ENCODE measurements at regions of chr21 and their contacts with region 1.

Region 1: GRCh38 chr21:39137248-39138178 is 45.7 kb downstream of the PSMG1 start:
- DNase-seq: peak; percentile 84
- H3K4me3 Mint-ChIP-seq: no peak overlapping the region
- H3K27ac Mint-ChIP-seq: no peak overlapping the region
- H3K4me1 Mint-ChIP-seq: peaks cover 14% of the 10 kb centered on the region
- H3K27me3 Mint-ChIP-seq: no peaks in the 10 kb centered on the region
- CTCF ChIP-seq: no peak

Region 2: DNA sequence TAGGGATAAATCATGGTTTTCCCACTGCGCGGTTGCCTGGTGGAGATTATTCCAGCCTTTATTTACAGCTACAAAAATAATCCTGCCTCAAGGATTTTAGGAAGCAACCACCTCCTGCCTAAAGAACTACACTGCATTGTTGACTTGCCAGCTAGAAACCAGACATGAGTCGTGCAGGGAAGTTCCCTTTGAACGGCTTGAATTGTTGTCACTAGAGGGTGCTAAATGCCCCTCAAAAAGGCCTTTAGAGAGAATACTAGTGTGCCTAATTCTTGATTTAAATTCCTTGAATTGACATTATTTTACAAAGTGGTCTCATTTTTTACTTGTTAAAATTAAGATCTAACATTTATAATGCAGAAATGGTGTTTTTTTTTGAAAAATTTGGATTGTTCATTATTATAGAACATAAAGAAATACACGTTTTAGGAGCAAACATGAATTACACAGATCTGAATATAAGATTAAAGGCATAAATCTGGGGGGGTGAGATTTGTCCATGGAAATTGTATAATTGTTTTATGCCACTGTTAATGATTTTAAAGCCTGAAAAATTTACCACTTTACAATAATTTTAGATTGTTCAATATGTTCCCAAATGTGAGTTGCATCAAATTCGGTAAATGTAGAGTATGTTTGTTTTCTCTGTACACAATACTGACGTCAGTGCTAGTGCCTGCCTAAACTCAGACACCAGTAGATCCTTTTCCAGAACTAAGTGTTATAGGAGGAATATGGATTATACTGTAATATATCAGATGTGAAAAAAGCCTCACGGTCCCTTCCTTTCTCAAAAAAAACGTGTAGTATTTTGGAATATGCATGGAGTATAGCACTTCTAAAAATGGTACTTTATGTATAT is 631.6 kb before region 1 on chr21:
- CTCF ChIA-PET with region 1: interaction called, 11 read pairs
- POLR2A ChIA-PET with region 1: no interaction called
- intact Hi-C with region 1: loop called (anchors 1 kb)
- DNase-seq: peak; percentile 81
- H3K4me3 Mint-ChIP-seq: no peak overlapping the region
- H3K27ac Mint-ChIP-seq: no peak overlapping the region
- H3K4me1 Mint-ChIP-seq: peaks cover 5% of the 10 kb centered on the region
- H3K27me3 Mint-ChIP-seq: no peaks in the 10 kb centered on the region
- CTCF ChIP-seq: peak; percentile 54

Region 3: GRCh38 chr21:38669176-38669575 is 468.3 kb before region 1 on chr21:
- CTCF ChIA-PET with region 1: interaction called, 28 read pairs
- POLR2A ChIA-PET with region 1: interaction called, 6 read pairs
- intact Hi-C with region 1: loop called (anchors 1 kb)
- DNase-seq: peak; percentile 48
- H3K4me3 Mint-ChIP-seq: no peak overlapping the region
- H3K27ac Mint-ChIP-seq: no peak overlapping the region
- H3K4me1 Mint-ChIP-seq: no peaks in the 10 kb centered on the region
- H3K27me3 Mint-ChIP-seq: peaks cover 35% of the 10 kb centered on the region
- CTCF ChIP-seq: peak; percentile 48

Region 4: DNA sequence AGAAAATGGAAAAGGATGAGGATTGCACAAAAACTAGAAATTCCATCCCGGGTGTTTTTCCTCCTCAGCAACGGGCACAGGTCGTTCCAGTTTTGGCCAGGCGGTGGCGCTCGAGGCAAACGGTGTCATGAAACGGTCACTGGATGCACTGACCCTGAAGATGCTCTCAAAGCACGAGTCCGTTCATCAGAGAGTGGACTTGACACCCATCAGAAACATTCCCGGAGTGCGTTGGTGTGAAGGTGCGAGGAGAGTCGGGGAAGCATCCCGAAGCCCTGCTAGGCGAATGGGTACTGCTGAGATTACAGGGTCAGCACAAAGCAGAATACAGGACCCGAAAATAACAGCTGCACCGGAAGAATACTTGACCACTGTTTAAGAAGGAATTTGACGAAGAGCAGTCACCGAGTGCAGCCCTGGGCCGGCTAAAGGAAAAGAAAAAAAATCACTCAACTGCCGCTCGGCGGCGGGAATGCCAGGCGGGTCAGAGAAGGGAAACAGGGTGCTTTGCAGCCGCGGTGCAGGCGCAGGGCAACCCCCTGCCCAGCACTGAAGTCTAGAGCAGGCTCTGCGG is 403.5 kb before region 1 on chr21:
- CTCF ChIA-PET with region 1: interaction called, 19 read pairs
- POLR2A ChIA-PET with region 1: interaction called, 5 read pairs
- intact Hi-C with region 1: loop called (anchors 1 kb)
- DNase-seq: peak; percentile 75
- H3K4me3 Mint-ChIP-seq: no peak overlapping the region
- H3K27ac Mint-ChIP-seq: no peak overlapping the region
- H3K4me1 Mint-ChIP-seq: peaks cover 4% of the 10 kb centered on the region
- H3K27me3 Mint-ChIP-seq: no peaks in the 10 kb centered on the region
- CTCF ChIP-seq: peak; percentile 91

Region 5: GRCh38 chr21:39176271-39176709 is 38.8 kb after region 1 on chr21:
- CTCF ChIA-PET with region 1: interaction called, 15 read pairs
- POLR2A ChIA-PET with region 1: no interaction called
- intact Hi-C with region 1: no loop called
- DNase-seq: no peak
- H3K4me3 Mint-ChIP-seq: no peak overlapping the region
- H3K27ac Mint-ChIP-seq: no peak overlapping the region
- H3K4me1 Mint-ChIP-seq: peaks cover 18% of the 10 kb centered on the region
- H3K27me3 Mint-ChIP-seq: no peaks in the 10 kb centered on the region
- CTCF ChIP-seq: no peak

Region 6: GRCh38 chr21:39388038-39388810 is 250.7 kb after region 1 on chr21:
- CTCF ChIA-PET with region 1: no interaction called
- POLR2A ChIA-PET with region 1: no interaction called
- intact Hi-C with region 1: no loop called
- DNase-seq: peak; percentile 88
- H3K4me3 Mint-ChIP-seq: peak overlapping the region; percentile 68
- H3K27ac Mint-ChIP-seq: peak overlapping the region; percentile 31
- H3K4me1 Mint-ChIP-seq: peaks cover 10% of the 10 kb centered on the region
- H3K27me3 Mint-ChIP-seq: no peaks in the 10 kb centered on the region
- CTCF ChIP-seq: peak; percentile 85

Measured in MCF 10A (cell line).